T-cell (primary cell): ENCODE measurements at regions of chr3 and their contacts with region 1.

Region 1: DNA sequence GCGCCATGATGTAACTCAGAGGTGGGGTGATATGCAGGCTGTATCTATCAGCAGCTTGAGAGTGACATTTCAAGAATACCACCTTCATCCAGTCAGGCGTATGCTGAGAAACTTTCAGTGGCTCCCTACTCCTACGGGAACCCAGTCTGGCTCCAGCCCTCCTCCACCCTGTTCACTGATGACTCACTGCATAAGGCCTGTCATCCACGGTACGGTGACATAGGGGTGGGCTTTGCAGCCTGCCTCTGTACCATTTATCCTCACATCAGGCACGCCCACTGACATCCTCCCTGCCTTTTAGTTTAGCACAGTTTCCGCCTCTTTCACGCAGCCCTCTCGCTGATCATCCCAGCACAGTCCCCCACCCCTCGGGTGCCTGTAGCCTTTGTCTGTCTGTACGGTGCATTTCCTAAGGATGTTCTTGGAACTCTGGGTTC is 11.7 kb downstream of the PXYLP1 start:
- DNase-seq: peak; percentile 25 to 76 (median 60)
- ATAC-seq: peak; percentile 96 to 100 (median 99)
- H3K4me3 ChIP-seq: no peak overlapping the region
- H3K4me3 Mint-ChIP-seq: peak overlapping the region; percentile 17 to 67 (median 41)
- H3K27ac ChIP-seq: peak overlapping the region; percentile 50
- H3K27ac Mint-ChIP-seq: peak overlapping the region; percentile 79 to 89
- H3K4me1 ChIP-seq: peaks cover 14 to 31% of the 10 kb centered on the region in 2 experiments
- H3K4me1 Mint-ChIP-seq: peaks cover 37 to 52% (median 39%) of the 10 kb centered on the region in 3 donors
- H3K27me3 ChIP-seq: no peaks in the 10 kb centered on the region
- H3K27me3 Mint-ChIP-seq: no peaks in the 10 kb centered on the region

Region 2: GRCh38 chr3:141255846-141256261 is 12.6 kb after region 1 on chr3:
- CTCF ChIA-PET with region 1: interaction called, 3 to 14 read pairs
- POLR2A ChIA-PET with region 1: interaction called in 1 of 2 experiments, 4 read pairs
- DNase-seq: peak in 25 of 35 experiments; percentile 13 to 75 (median 40)
- ATAC-seq: peak; percentile 96 to 99 (median 96)
- H3K4me3 ChIP-seq: no peak overlapping the region
- H3K4me3 Mint-ChIP-seq: peak overlapping the region in 2 of 3 donors; percentile 4 to 18
- H3K27ac ChIP-seq: no peak overlapping the region
- H3K27ac Mint-ChIP-seq: peak overlapping the region; percentile 39 to 79
- H3K4me1 ChIP-seq: peaks cover 0 to 12% of the 10 kb centered on the region in 2 experiments
- H3K4me1 Mint-ChIP-seq: peaks cover 19 to 51% (median 51%) of the 10 kb centered on the region in 3 donors
- H3K27me3 ChIP-seq: no peaks in the 10 kb centered on the region
- H3K27me3 Mint-ChIP-seq: no peaks in the 10 kb centered on the region

Region 3: GRCh38 chr3:141370065-141370533 is 126.8 kb after region 1 on chr3:
- CTCF ChIA-PET with region 1: no interaction called
- POLR2A ChIA-PET with region 1: interaction called in 1 of 2 experiments, 16 read pairs
- DNase-seq: peak in 34 of 35 experiments; percentile 23 to 92 (median 58)
- ATAC-seq: peak; percentile 99 to 100 (median 100)
- H3K4me3 ChIP-seq: no peak overlapping the region
- H3K4me3 Mint-ChIP-seq: no peak overlapping the region
- H3K27ac ChIP-seq: no peak overlapping the region
- H3K27ac Mint-ChIP-seq: peak overlapping the region; percentile 4 to 37
- H3K4me1 ChIP-seq: no peaks in the 10 kb centered on the region
- H3K4me1 Mint-ChIP-seq: peaks cover under 1 to 7% (median 5%) of the 10 kb centered on the region in 3 donors
- H3K27me3 ChIP-seq: no peaks in the 10 kb centered on the region
- H3K27me3 Mint-ChIP-seq: no peaks in the 10 kb centered on the region